GM10248 (cell line): ENCODE measurements at regions of chr9 and their contacts with region 1.

Region 1: DNA sequence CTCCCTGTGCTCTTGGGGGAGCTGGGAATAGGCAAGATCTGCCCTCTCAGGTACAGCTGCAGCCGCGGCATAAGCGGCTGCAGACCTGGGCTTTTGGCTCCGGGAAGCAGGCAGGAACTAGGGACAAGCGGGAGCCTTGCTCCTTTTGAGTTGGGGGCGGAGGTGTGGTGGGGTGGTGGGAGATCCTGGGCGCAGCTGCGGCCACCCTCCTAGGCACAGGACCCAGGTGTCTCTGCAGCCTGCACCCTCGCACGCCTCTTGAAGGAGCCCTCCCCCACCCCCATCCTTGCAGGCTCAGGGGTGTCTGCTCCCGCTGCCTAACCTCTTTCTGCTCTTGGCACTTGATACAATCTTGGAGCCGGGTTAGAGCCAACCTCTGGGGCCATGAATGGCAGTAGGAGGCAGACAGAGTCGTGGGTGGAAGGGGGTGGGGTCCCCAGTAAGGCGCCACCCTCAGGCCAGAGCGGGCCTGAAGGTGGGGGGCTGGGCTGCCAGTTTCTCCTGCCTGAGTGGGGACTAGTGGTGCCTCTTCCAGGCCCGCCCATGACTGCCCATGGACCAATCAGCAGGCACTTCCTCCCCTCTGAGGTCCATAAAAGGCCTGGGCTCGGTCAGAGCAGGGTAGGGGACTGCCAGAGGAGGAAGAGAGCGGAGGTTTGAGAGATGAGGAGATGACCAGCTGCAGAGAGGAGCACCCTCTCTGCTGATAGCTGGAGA is 267.6 kb upstream of the TNC start:
- DNase-seq: no peak
- CTCF ChIP-seq: no peak

Region 2: DNA sequence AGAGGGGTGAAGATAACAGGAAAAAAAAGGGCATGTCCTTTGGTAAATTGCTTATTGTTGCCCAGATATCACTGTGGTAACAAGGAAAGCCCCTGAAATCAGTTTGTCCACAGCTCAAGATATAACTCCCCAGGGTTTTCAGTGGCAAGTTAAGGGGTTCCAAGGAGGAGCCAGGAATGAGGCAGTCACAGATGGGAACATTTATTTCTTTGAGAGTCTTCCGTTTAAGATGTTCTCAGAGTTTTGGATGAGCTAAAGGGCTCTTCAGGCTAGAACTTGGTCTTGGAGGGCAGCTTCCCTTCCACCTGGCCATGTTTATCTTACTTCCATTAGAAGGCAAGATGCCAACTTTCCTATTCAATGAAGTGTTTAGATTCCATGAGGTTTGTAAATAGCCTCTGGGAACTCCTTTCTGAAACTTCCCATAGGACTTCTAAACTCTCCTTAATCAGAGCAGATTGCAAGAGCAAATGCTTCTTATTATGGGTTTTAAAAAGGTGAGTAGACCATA is 10.0 kb after region 1 on chr9:
- CTCF ChIA-PET with region 1: interaction called, 12 read pairs
- POLR2A ChIA-PET with region 1: no interaction called
- DNase-seq: no peak
- CTCF ChIP-seq: no peak